Activated CD4-positive, alpha-beta memory T cell treated with anti-CD3 and anti-CD28 coated beads, Interleukin-2, amount 10 ng/mL, durations not matched to agents 7 days and 5 days (primary cell): ENCODE measurements at regions of chr3 and their contacts with region 1.

Region 1: DNA sequence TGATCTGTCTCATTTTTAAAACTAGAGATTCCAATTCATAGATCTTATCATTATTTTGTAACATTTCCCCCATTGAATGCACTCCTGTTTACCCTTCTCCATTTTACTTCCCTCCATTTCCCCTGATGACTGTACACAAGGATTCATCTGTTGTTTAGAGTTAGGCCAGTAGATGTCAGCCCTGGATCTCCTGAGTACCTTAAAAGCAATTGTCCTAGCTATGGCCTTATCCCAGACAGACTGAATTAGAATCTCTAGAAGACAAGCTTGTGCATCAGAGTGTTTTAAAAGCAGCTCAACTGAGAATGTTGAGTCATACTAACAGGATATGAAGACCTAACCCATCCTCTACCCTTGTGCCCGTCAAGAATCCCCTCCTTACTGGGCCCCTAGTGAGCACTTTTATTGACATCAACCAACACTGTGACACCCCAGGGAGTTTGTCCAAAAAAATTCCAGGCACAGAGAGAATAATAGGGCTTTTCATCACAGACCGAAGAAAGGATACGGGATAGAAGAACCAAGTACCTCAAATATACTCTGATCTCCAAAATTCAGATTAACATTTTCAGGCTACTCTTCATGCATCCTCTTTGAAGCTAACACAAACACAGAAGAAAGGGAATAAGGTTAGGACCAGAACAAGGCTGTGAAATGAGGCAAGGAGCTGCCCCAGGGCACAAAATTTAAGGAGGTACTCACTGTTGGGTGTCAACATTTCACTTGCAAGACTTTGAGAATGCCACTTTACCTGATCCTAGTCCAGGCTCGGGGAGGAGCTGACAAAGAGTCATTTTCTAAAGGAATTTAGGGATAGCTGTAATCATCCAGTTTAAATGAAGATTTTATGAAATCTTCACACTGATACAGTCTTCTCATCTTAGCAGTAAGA is 17.1 kb downstream of the ZBED2 start:
- DNase-seq: no peak
- H3K4me3 Mint-ChIP-seq: no peak overlapping the region
- H3K27ac Mint-ChIP-seq: peak overlapping the region; percentile 68
- H3K4me1 Mint-ChIP-seq: peaks cover 67% of the 10 kb centered on the region
- H3K27me3 Mint-ChIP-seq: no peaks in the 10 kb centered on the region

Region 2: GRCh38 chr3:111566844-111567243 is 11.2 kb before region 1 on chr3:
- CTCF ChIA-PET with region 1: no interaction called
- POLR2A ChIA-PET with region 1: no interaction called
- DNase-seq: no peak
- H3K4me3 Mint-ChIP-seq: no peak overlapping the region
- H3K27ac Mint-ChIP-seq: no peak overlapping the region
- H3K4me1 Mint-ChIP-seq: peaks cover 50% of the 10 kb centered on the region
- H3K27me3 Mint-ChIP-seq: no peaks in the 10 kb centered on the region

Region 3: DNA sequence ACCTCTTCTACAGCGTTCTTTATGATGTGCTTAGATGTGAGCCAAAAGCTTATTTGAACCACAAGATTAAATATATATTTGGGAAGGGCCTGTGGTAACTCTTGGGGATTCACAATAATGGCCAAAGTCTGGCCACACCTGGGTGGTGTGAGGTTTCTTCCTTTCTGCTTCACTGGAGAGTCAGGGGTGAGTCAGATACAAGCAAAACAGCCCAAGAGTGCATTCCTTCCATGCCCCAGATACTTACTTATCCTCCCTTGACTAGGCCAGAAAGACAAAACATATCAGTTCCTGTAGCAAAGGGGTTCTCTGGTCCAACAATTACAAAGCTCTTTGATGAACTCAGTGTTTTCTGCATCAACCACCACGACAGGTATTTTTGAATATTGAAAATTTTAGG is 16.2 kb after region 1 on chr3:
- CTCF ChIA-PET with region 1: interaction called, 7 read pairs
- POLR2A ChIA-PET with region 1: interaction called, 19 read pairs
- DNase-seq: no peak
- H3K4me3 Mint-ChIP-seq: peak overlapping the region; percentile 71
- H3K27ac Mint-ChIP-seq: peak overlapping the region; percentile 85
- H3K4me1 Mint-ChIP-seq: peaks cover 86% of the 10 kb centered on the region
- H3K27me3 Mint-ChIP-seq: no peaks in the 10 kb centered on the region